ENCODE measurements at regions of chr17 and their contacts with region 1.

Region 1: DNA sequence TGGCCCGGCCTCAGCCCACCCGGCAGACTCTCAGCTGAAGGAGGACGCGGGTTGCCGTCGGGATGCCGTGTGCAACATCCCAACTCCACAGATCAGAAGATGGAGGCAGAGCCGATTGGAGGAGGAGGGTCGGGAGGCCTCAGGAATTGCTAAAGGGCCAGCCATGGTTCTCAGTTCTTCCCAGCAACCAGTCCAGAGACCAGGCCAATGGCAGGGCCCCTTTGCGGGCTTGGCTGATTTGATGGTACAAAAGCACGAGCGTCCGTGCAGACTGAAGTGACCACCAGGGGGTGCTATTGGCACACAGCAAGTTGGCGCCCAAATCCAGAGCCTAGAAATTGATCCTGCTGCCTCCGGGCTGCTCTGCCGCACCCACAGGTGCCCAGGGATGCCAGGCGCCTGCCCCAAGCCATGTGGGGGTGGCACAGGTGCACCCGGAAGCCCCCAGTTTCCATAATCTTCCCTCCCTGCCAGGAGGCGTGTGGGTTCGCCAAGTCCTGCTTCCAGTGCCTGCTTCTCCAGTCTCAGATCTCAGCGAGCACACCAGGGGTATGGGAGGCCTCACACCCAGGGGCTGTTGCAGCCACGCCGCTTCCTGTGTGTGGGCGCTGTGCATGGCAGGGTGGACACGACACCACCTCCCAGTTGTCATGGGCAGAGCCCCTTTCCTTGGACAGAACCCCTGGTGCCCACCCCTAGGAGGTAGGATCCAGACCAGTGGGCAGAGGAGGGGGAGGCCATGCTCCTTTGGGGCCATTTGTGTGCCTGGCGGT is 7.1 kb upstream of the TEX19 start:
- DNase-seq: peak; percentile 85 to 89
- H3K4me3 ChIP-seq: no peak overlapping the region
- H3K27ac ChIP-seq: no peak overlapping the region
- H3K4me1 ChIP-seq: peaks cover 12 to 31% of the 10 kb centered on the region in 2 donors
- H3K27me3 ChIP-seq: no peaks in the 10 kb centered on the region
- CTCF ChIP-seq: peak; percentile 84 to 94 (median 90)
- POLR2A ChIP-seq: no peak

Region 2: DNA sequence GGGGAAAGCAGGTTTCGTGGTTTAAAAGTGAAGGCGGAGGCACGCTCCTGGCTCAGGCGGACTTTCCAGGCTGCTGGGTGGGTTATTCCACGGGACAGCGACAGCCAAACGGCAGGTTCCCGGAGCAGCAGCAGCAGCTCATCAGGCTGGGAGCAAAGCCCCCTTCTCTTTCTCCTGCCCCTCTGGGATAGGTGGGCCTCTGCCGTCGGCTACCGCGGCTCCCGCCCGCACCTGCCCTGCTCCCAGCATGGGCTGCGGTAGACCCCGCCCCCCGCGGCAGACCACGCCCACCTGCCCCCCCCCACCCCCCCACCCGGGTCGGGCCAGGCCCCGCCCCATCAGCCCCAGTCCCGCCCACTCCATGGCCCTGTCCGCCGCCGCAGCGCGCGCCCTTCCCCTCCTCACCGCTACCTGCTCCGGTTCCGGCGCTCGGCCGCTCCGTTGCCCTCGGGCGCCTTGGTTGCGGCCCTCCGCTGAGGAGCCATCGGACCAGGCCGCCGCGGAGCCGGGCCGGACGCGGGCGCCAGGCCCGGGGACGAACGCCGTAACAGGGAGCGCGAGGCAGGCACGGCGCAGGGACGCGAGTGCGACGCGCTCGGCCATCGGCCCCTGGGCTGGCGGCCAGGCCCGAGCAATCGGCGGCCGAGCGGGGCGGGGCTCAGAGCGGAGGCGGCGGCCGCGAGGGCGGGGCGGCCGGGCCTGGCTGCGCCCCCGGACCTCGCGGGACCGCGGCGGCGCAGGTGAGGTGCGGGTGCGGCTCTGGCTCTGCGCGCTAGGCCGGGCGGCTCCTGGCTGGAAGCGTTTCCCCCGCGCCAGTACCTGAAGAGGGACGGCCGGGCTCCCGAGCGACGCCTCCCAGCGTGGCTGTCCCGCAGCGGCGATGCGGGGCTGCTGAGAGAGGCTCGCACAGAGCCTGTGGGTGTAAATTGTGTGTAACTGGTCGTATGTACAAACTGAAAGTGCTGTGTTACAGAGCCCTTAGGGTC is 66.4 kb after region 1 on chr17 and contains the starts of genes HEXD and OGFOD3:
- intact Hi-C with region 1: loop called (anchors 2 kb)
- DNase-seq: peak; percentile 85
- H3K4me3 ChIP-seq: peak within 1 kb of the TSS; percentile 53 to 95 (median 71)
- H3K27ac ChIP-seq: peak within 1 kb of the TSS; percentile 55 to 95 (median 90)
- H3K4me1 ChIP-seq: peaks cover 12 to 17% of the 10 kb centered on the region in 2 donors
- H3K27me3 ChIP-seq: no peaks in the 10 kb centered on the region
- CTCF ChIP-seq: peak in 2 of 6 experiments; percentile 39 to 41
- POLR2A ChIP-seq: peak; percentile 27 to 78
- total RNA-seq, gene HEXD: 33.2 to 72.7 (median 40.9) TPM
- total RNA-seq, gene OGFOD3: 46.5 to 57.5 (median 55.1) TPM

Region 3: GRCh38 chr17:82457997-82458864 is 106.3 kb after region 1 on chr17 and contains the start of gene NARF:
- intact Hi-C with region 1: no loop called
- DNase-seq: peak; percentile 98
- H3K4me3 ChIP-seq: peak within 1 kb of the TSS; percentile 76 to 99 (median 79)
- H3K27ac ChIP-seq: peak within 1 kb of the TSS; percentile 98 to 100 (median 100)
- H3K4me1 ChIP-seq: peaks cover 13 to 22% of the 10 kb centered on the region in 2 donors
- H3K27me3 ChIP-seq: no peaks in the 10 kb centered on the region
- CTCF ChIP-seq: no peak
- POLR2A ChIP-seq: peak; percentile 90 to 96
- total RNA-seq, gene NARF: 47.5 to 69.7 (median 48.7) TPM

Region 4: DNA sequence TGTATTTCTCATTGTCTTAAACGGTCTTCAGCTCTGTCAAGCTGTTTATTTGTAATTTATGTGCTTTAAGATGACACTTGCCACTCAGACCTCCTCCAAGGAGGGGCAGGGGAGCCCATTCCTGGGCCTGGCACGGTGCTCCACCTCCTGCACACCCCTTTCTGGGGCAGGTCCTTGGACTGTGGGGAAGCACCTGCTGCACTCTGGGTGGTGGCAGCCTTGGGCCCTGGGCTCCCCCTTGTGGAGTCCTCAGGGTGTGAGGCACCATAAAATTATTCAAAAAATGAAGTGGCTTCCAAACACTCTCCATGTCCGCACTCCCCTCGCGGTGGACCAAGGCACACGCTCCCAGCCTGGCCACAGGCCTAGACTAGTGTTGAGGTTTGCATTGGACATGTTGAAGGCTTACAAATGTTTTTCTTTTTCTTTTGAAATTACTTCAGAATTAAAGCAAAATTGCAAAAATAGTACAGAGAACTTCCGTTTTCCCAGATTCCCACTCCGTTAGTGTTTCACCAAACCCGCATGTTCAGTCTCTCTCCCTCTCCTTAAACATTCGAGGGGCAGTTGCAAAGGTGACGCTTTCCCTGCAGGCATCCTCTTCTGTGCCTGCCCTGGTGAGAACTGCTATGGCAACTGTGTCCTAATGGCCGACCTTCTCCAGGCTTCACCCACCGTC is 200.0 kb after region 1 on chr17:
- intact Hi-C with region 1: loop called (anchors 5 kb)
- DNase-seq: peak; percentile 84 to 85
- H3K4me3 ChIP-seq: no peak overlapping the region
- H3K27ac ChIP-seq: peak overlapping the region in 1 of 3 donors; percentile 8
- H3K4me1 ChIP-seq: peaks cover 40 to 55% of the 10 kb centered on the region in 2 donors
- H3K27me3 ChIP-seq: no peaks in the 10 kb centered on the region
- CTCF ChIP-seq: peak; percentile 60 to 82 (median 78)
- POLR2A ChIP-seq: no peak

Region 5: GRCh38 chr17:82775001-82775823 is 423.3 kb after region 1 on chr17:
- intact Hi-C with region 1: loop called (anchors 10 kb)
- DNase-seq: peak; percentile 67 to 77
- H3K4me3 ChIP-seq: no peak overlapping the region
- H3K27ac ChIP-seq: no peak overlapping the region
- H3K4me1 ChIP-seq: peaks cover 5 to 8% of the 10 kb centered on the region in 2 donors
- H3K27me3 ChIP-seq: no peaks in the 10 kb centered on the region
- CTCF ChIP-seq: peak; percentile 60 to 94 (median 70)
- POLR2A ChIP-seq: no peak

Measured in thyroid gland (tissue), 4 donors.